ENCODE measurements at regions of chr3 and their contacts with region 1.

Region 1: DNA sequence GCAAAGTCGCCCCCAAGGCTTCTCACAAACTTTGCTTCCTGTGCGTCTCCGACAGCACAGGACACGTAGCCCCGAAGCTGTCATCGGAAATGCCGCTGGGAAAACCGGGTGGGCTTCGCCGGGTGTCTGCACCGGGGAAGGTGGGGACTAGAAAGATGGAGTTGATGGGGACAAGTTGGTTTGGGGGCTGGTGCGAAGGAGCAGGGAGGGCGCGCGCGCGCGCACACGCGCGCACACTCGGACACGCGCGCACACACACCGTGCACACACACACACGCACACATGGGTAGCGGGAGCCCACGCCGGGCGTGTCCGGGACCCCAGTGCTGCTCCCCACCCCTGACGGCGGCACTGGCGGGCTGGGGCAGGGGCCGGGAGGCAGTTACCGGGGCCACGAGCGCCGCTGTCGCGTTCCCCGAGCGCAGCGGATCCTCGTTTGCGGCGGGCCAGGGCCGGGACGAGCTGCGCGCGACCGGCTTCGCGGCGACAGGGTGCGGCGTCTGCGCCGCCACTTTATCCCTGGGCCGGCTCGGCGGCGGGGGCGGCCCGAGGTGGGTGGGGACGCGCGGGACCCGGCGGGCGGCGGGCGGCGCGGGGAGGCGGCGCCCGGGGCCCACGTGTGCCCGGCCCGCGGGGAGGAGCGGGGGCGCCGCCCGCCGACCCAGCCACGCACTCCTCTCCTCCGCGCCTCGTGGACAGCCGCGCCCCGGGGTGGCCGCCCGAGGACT is 547 bp upstream of the MGLL start:
- DNase-seq: peak in 3 of 4 donors; percentile 56 to 91 (median 71)
- ATAC-seq: peak; percentile 62
- H3K4me3 ChIP-seq: peak overlapping the region; percentile 66 to 81
- H3K27ac ChIP-seq: peak overlapping the region; percentile 86 to 91
- H3K4me1 ChIP-seq: peaks cover 17 to 49% of the 10 kb centered on the region in 2 donors
- H3K27me3 ChIP-seq: no peaks in the 10 kb centered on the region
- CTCF ChIP-seq: no peak

Region 2: DNA sequence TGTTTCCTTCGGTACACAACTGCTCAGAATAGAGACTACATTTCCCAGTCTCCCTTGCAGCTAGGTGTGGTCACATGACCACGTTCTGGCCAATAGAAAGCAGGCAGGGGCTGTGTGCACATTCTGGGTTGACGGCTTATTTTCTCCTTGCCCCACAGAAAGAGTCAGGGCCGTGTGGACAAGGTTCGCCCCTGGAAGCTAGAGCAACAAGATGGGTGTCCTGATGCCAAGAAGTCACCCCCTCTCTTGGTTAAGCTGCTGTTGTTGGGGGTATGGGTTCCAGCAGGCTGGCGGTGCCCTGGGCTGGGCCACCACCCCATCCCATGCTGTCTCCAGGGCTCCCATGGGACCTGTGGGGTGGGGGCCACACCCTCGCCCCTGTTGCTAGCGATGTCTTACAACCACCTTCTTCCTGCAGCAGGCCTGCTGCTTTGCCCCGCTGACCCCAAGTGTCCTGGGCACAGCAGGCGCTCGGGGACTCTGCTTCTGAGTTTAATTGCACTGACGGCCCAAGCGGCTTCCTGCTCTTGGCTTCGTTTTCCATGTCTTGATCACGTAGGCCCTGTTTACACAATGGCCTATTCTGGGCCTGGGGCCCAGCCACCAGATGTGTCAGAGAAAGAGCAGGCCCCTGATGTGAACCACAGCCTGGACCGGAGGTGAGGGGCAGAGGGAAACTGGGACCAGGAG is 125.2 kb before region 1 on chr3:
- intact Hi-C with region 1: loop called in 1 of 2 experiments (anchors 10 kb)
- DNase-seq: peak; percentile 60 to 94 (median 88)
- ATAC-seq: peak; percentile 73
- H3K4me3 ChIP-seq: no peak overlapping the region
- H3K27ac ChIP-seq: peak overlapping the region; percentile 82 to 88
- H3K4me1 ChIP-seq: peaks cover 23 to 62% of the 10 kb centered on the region in 2 donors
- H3K27me3 ChIP-seq: no peaks in the 10 kb centered on the region
- CTCF ChIP-seq: no peak